ENCODE measurements at regions of chr20 and their contacts with region 1.

Region 1: GRCh38 chr20:39049684-39050554 is 87.8 kb downstream of the DHX35 start:
- DNase-seq: peak; percentile 90 to 97
- H3K4me3 ChIP-seq: peak overlapping the region; percentile 88
- H3K4me3 Mint-ChIP-seq: peak overlapping the region; percentile 82
- H3K27ac Mint-ChIP-seq: peak overlapping the region; percentile 65
- H3K4me1 ChIP-seq: peaks cover 4% of the 10 kb centered on the region; the same call in 1 of the 2 replicates
- H3K4me1 Mint-ChIP-seq: no peaks in the 10 kb centered on the region
- H3K27me3 ChIP-seq: no peaks in the 10 kb centered on the region
- H3K27me3 Mint-ChIP-seq: peaks cover 13% of the 10 kb centered on the region
- CTCF ChIP-seq: peak; percentile 100

Region 2: DNA sequence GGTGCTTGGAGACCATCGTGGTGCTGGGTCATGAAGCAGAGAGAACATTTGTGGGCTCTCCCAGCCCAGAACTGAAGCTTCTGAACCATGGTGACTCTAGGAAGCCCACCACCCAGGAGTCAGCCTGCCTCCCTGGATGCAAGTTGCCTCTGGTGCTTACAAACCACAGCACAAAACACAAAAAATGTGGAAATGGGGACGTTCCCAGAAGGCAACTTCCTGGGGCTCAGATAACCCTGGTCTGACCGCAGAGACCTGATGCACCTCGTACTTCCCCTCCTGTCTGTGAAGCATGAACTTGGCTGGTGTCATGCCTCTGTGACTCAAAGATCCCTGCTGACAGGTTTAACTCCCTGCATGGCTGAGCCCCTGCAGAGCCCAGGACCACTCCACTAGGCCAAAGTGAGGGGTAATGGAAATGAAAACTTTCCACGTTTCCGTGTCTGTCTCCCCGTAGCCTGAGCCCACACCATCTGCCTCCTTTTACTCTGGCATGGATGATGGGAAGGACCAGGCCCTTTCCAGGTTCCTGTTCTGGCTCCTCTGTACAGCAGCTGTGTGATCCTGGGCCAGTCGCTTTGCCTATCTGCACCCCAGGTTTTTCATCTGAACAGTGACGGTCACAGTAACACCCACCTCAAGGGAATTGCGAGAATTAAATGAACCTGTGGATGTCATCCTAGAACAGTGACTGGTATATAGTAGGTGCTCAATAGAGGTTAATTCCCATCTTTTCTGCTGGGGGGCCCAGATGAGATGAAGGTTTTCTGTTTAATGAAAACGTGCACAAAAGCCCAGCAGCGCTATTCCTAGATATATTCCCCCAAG is 186.7 kb before region 1 on chr20:
- CTCF ChIA-PET with region 1: interaction called, 10 read pairs
- POLR2A ChIA-PET with region 1: no interaction called
- intact Hi-C with region 1: loop called (anchors 1 kb)
- DNase-seq: peak in 1 of 2 experiments; percentile 37
- H3K4me3 ChIP-seq: no peak overlapping the region
- H3K4me3 Mint-ChIP-seq: no peak overlapping the region
- H3K27ac Mint-ChIP-seq: no peak overlapping the region
- H3K4me1 ChIP-seq: no peaks in the 10 kb centered on the region
- H3K4me1 Mint-ChIP-seq: no peaks in the 10 kb centered on the region
- H3K27me3 ChIP-seq: 0 out of 2 replicates have a peak, but pooled peaks cover 2% of the 10 kb centered on the region
- H3K27me3 Mint-ChIP-seq: no peaks in the 10 kb centered on the region
- CTCF ChIP-seq: no peak

Region 3: DNA sequence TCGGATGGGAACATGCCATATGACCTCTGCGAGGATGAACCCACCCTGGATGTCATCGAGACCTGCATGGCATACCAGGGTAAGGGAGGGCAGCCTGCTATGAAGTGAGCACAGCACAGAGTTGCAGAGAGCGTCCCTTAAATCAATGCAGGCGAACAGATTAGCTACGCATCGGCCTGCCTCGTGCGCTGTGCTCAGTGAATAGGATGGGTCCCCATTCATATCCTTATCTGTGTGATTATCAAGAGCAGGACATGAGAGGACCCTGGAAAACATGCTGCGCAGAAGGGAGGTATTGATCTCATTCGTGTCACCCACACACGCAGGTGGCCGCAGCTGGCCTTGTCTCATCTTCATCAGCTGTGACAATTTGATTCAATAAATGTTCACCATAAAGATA is 149.3 kb before region 1 on chr20:
- CTCF ChIA-PET with region 1: no interaction called
- POLR2A ChIA-PET with region 1: no interaction called
- intact Hi-C with region 1: loop called (anchors 5 kb)
- DNase-seq: no peak
- H3K4me3 ChIP-seq: no peak overlapping the region
- H3K4me3 Mint-ChIP-seq: no peak overlapping the region
- H3K27ac Mint-ChIP-seq: no peak overlapping the region
- H3K4me1 ChIP-seq: no peaks in the 10 kb centered on the region
- H3K4me1 Mint-ChIP-seq: no peaks in the 10 kb centered on the region
- H3K27me3 ChIP-seq: no peaks in the 10 kb centered on the region
- H3K27me3 Mint-ChIP-seq: peaks cover 12% of the 10 kb centered on the region
- CTCF ChIP-seq: no peak

Region 4: GRCh38 chr20:38947931-38948362 is 102.0 kb before region 1 on chr20:
- CTCF ChIA-PET with region 1: interaction called, 12 read pairs
- POLR2A ChIA-PET with region 1: no interaction called
- intact Hi-C with region 1: no loop called
- DNase-seq: no peak
- H3K4me3 ChIP-seq: no peak overlapping the region
- H3K4me3 Mint-ChIP-seq: no peak overlapping the region
- H3K27ac Mint-ChIP-seq: no peak overlapping the region
- H3K4me1 ChIP-seq: no peaks in the 10 kb centered on the region
- H3K4me1 Mint-ChIP-seq: no peaks in the 10 kb centered on the region
- H3K27me3 ChIP-seq: no peaks in the 10 kb centered on the region
- H3K27me3 Mint-ChIP-seq: no peaks in the 10 kb centered on the region
- CTCF ChIP-seq: no peak

Region 5: GRCh38 chr20:39036011-39036410 is 13.9 kb before region 1 on chr20:
- CTCF ChIA-PET with region 1: interaction called, 12 read pairs
- POLR2A ChIA-PET with region 1: no interaction called
- intact Hi-C with region 1: no loop called
- DNase-seq: no peak
- H3K4me3 ChIP-seq: no peak overlapping the region
- H3K4me3 Mint-ChIP-seq: no peak overlapping the region
- H3K27ac Mint-ChIP-seq: no peak overlapping the region
- H3K4me1 ChIP-seq: no peaks in the 10 kb centered on the region
- H3K4me1 Mint-ChIP-seq: no peaks in the 10 kb centered on the region
- H3K27me3 ChIP-seq: no peaks in the 10 kb centered on the region
- H3K27me3 Mint-ChIP-seq: no peaks in the 10 kb centered on the region
- CTCF ChIP-seq: no peak

Region 6: GRCh38 chr20:39075731-39076130 is 25.8 kb after region 1 on chr20:
- CTCF ChIA-PET with region 1: interaction called, 74 read pairs
- POLR2A ChIA-PET with region 1: no interaction called
- intact Hi-C with region 1: no loop called
- DNase-seq: no peak
- H3K4me3 ChIP-seq: no peak overlapping the region
- H3K4me3 Mint-ChIP-seq: no peak overlapping the region
- H3K27ac Mint-ChIP-seq: no peak overlapping the region
- H3K4me1 ChIP-seq: no peaks in the 10 kb centered on the region
- H3K4me1 Mint-ChIP-seq: no peaks in the 10 kb centered on the region
- H3K27me3 ChIP-seq: peaks cover 1% of the 10 kb centered on the region; the same call in 1 of the 2 replicates
- H3K27me3 Mint-ChIP-seq: peaks cover 45% of the 10 kb centered on the region
- CTCF ChIP-seq: no peak

Measured in Caco-2 (cell line).